PC-3 (cell line): ENCODE measurements at regions of chr5 and their contacts with region 1.

Region 1: GRCh38 chr5:96752341-96753016 is 55.3 kb downstream of the ERAP1 start:
- DNase-seq: peak; percentile 87
- ATAC-seq: no peak
- H3K4me3 ChIP-seq: no peak overlapping the region
- H3K27ac ChIP-seq: no peak overlapping the region
- H3K4me1 ChIP-seq: no peaks in the 10 kb centered on the region
- H3K27me3 ChIP-seq: no peaks in the 10 kb centered on the region
- CTCF ChIP-seq: peak; percentile 91

Region 2: DNA sequence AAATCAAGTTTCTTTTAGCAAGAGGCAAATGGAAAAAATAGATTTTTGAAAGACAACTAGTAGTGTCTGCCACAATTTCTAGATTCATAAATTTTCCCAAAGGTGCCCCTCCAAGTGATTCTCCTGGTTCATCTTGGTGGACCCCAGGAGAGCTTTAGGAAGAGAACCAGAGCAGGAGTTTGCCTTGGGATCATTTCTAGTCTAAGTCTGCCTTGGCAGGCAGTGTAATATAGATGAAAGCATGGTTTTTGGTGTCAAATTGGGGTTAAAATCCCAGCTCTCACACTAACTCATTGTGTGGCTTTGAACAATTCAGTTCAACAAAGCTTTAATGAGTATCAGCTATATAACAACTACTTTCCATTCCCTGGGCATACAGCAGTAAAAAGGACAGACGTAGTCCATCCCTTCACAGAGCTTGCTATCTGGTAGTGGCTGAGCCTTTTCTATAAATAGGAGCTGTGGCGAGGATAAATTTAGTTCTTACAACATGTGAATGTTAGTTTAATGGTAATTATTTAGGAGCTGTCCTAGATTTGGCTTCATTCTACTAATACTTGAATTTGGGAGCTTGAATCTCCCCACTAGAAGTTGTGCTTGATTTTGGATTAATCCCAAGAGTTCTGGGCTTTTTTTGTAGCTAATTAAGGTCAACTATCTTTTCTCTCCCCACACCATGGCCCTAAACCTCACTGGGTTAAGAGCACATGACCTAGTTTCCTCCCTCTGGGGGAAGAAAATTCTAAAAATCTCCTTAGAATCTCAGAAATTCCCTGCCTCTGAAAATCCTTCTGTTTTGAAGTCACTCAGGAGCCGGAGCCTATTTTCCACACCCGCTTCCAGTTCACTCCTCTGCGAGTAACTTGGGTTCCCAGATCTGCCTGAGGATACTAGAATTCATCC is 517.2 kb before region 1 on chr5:
- CTCF ChIA-PET with region 1: no interaction called
- POLR2A ChIA-PET with region 1: no interaction called
- intact Hi-C with region 1: no loop called
- DNase-seq: no peak
- ATAC-seq: no peak
- H3K4me3 ChIP-seq: no peak overlapping the region
- H3K27ac ChIP-seq: no peak overlapping the region
- H3K4me1 ChIP-seq: no peaks in the 10 kb centered on the region
- H3K27me3 ChIP-seq: no peaks in the 10 kb centered on the region
- CTCF ChIP-seq: no peak

Region 3: GRCh38 chr5:96775671-96776070 is 23.2 kb after region 1 on chr5:
- CTCF ChIA-PET with region 1: no interaction called
- POLR2A ChIA-PET with region 1: no interaction called
- intact Hi-C with region 1: no loop called
- DNase-seq: no peak
- ATAC-seq: no peak
- H3K4me3 ChIP-seq: no peak overlapping the region
- H3K27ac ChIP-seq: no peak overlapping the region
- H3K4me1 ChIP-seq: peaks cover 7% of the 10 kb centered on the region
- H3K27me3 ChIP-seq: no peaks in the 10 kb centered on the region
- CTCF ChIP-seq: no peak

Region 4: GRCh38 chr5:96868603-96869371 is 116.3 kb after region 1 on chr5:
- CTCF ChIA-PET with region 1: interaction called, 23 read pairs
- POLR2A ChIA-PET with region 1: no interaction called
- intact Hi-C with region 1: loop called (anchors 2 kb)
- DNase-seq: peak; percentile 76
- ATAC-seq: peak; percentile 97
- H3K4me3 ChIP-seq: no peak overlapping the region
- H3K27ac ChIP-seq: no peak overlapping the region
- H3K4me1 ChIP-seq: peaks cover 7% of the 10 kb centered on the region; the same call in 1 of the 2 replicates
- H3K27me3 ChIP-seq: no peaks in the 10 kb centered on the region
- CTCF ChIP-seq: peak; percentile 94

Region 5: GRCh38 chr5:97021416-97021815 is 268.9 kb after region 1 on chr5:
- CTCF ChIA-PET with region 1: interaction called, 10 read pairs
- POLR2A ChIA-PET with region 1: no interaction called
- intact Hi-C with region 1: no loop called
- DNase-seq: no peak
- ATAC-seq: no peak
- H3K4me3 ChIP-seq: no peak overlapping the region
- H3K27ac ChIP-seq: no peak overlapping the region
- H3K4me1 ChIP-seq: no peaks in the 10 kb centered on the region
- H3K27me3 ChIP-seq: no peaks in the 10 kb centered on the region
- CTCF ChIP-seq: no peak

Region 6: GRCh38 chr5:97142521-97143254 is 390.2 kb after region 1 on chr5 and contains the start of gene LIX1:
- CTCF ChIA-PET with region 1: interaction called, 9 read pairs
- POLR2A ChIA-PET with region 1: interaction called, 5 read pairs
- intact Hi-C with region 1: loop called (anchors 5 kb)
- DNase-seq: peak; percentile 63
- ATAC-seq: peak; percentile 87
- H3K4me3 ChIP-seq: no peak within 1 kb of the TSS
- H3K27ac ChIP-seq: no peak within 1 kb of the TSS
- H3K4me1 ChIP-seq: no peaks in the 10 kb centered on the region
- H3K27me3 ChIP-seq: no peaks in the 10 kb centered on the region
- CTCF ChIP-seq: peak; percentile 82
- total RNA-seq, gene LIX1: not detected in 2 replicates

Region 7: DNA sequence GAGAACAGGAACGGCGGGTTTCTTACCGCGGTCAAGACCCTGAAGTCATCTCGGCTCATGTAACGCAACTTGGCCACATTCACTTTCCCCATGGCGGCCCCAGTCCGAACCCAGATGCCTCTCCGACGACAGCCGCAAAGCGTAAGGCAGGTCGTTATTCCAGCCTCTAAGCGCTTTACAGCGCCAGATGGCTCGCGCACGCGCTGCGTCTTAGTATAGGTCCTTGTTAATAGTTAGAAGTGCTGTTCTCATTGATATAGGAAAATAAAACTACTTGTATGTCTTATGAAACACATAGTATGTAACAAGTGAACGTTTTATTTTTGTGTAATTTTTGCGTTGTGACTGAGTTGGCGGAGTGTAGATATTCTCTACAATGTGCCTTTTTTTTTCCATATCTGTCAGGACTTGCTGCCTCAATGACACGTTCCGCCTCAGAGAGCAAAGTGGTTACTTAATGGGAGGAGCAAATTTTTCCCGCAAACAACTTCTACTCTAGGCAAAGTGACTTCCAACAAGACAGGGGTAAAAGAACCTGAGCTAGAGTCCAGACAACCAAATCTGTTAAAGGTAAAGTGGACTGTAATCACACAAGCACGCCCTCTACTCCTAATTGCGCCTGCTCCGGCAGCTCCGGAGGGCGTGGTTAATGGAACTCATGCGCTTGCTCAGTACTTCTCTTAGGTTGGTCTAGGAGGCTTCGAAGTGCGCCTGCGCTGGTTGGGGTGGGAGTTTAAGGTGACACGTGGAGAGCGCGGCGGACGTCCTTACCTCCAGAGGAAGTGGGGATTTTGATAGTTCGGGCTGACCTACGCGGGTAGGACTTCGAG is 430.8 kb after region 1 on chr5 and contains the start of gene RIOK2:
- CTCF ChIA-PET with region 1: interaction called, 13 read pairs
- POLR2A ChIA-PET with region 1: no interaction called
- intact Hi-C with region 1: no loop called
- DNase-seq: peak; percentile 95
- ATAC-seq: peak; percentile 90
- H3K4me3 ChIP-seq: peak within 1 kb of the TSS; percentile 84
- H3K27ac ChIP-seq: peak within 1 kb of the TSS; percentile 85
- H3K4me1 ChIP-seq: peaks cover 14% of the 10 kb centered on the region
- H3K27me3 ChIP-seq: no peaks in the 10 kb centered on the region
- CTCF ChIP-seq: no peak
- total RNA-seq, gene RIOK2: 16.1 and 22.3 TPM in 2 replicates

Region 8: GRCh38 chr5:98248949-98249348 is 1496.5 kb after region 1 on chr5:
- CTCF ChIA-PET with region 1: no interaction called
- POLR2A ChIA-PET with region 1: no interaction called
- intact Hi-C with region 1: loop called (anchors 5 kb)
- DNase-seq: peak; percentile 80
- ATAC-seq: no peak
- H3K4me3 ChIP-seq: no peak overlapping the region
- H3K27ac ChIP-seq: no peak overlapping the region
- H3K4me1 ChIP-seq: peaks cover 5% of the 10 kb centered on the region; the same call in 1 of the 2 replicates
- H3K27me3 ChIP-seq: no peaks in the 10 kb centered on the region
- CTCF ChIP-seq: no peak